Aorta (tissue), 5 donors: ENCODE measurements at regions of chr2 and their contacts with region 1.

Region 1: GRCh38 chr2:46389417-46389916 is 89.9 kb upstream of the TMEM247 start:
- DNase-seq: no peak
- ATAC-seq: peak; percentile 11
- H3K4me3 ChIP-seq: no peak overlapping the region
- H3K27ac ChIP-seq: no peak overlapping the region
- H3K4me1 ChIP-seq: peaks cover 0 to 5% of the 10 kb centered on the region in 2 donors
- H3K27me3 ChIP-seq: no peaks in the 10 kb centered on the region

Region 2: GRCh38 chr2:45691171-45691999 is 698.1 kb before region 1 on chr2:
- intact Hi-C with region 1: no loop called
- DNase-seq: no peak
- ATAC-seq: no peak
- H3K4me3 ChIP-seq: no peak overlapping the region
- H3K27ac ChIP-seq: no peak overlapping the region
- H3K4me1 ChIP-seq: peaks cover 0 to 9% of the 10 kb centered on the region in 2 donors
- H3K27me3 ChIP-seq: no peaks in the 10 kb centered on the region

Region 3: DNA sequence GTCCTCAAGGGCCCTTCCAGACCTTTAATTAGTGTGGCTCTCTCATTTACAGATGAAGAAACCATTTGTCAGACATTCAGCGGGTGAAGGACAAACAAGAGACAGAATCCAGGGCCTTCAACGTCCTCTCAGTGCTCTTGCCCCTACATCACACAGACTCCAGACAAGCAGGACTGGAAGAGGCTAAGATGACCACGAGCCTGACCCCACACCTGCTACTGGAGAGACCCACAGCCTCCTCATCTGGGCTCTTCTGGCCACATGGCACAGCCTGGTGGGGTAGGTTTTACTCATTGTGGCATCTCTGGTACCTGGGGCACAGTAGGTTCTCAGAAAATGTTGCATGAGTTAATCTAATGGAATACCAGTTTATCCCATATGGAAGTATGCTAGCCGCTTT is 20.3 kb after region 1 on chr2:
- intact Hi-C with region 1: loop called in 1 of 2 experiments (anchors 2 kb)
- DNase-seq: no peak
- ATAC-seq: no peak
- H3K4me3 ChIP-seq: no peak overlapping the region
- H3K27ac ChIP-seq: no peak overlapping the region
- H3K4me1 ChIP-seq: no peaks in the 10 kb centered on the region
- H3K27me3 ChIP-seq: no peaks in the 10 kb centered on the region

Region 4: GRCh38 chr2:46439582-46439981 is 50.1 kb after region 1 on chr2:
- intact Hi-C with region 1: no loop called
- DNase-seq: no peak
- ATAC-seq: no peak
- H3K4me3 ChIP-seq: no peak overlapping the region
- H3K27ac ChIP-seq: no peak overlapping the region
- H3K4me1 ChIP-seq: no peaks in the 10 kb centered on the region
- H3K27me3 ChIP-seq: no peaks in the 10 kb centered on the region

Region 5: DNA sequence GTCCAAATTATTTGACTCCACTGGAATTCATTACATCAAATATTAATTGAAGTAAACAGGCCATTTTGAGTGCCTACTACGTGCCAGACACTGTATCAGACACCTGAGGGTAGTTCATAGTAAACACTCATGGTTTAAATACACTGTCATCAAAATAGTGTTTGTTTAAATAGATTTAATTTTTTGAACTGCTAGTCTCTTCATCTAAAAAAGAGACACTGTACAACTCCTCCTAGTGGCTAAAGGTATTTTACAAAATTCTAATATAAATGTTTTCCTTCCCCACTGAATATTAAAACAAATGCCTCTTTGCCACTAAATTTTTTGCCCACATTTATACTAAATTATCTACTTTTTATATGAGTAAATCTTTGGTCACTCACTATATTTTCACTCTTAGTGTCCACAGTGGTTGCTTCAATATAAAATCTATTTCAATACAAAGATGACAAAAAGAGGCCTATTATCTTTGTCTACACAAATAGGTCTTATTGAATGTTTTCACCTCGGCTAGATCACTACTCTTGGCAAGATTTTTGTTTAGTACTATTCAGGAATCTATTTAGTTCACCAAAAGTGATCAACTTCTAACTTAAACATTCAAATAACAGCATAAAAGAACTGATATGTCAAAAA is 212.0 kb after region 1 on chr2:
- intact Hi-C with region 1: no loop called
- DNase-seq: no peak
- ATAC-seq: no peak
- H3K4me3 ChIP-seq: no peak overlapping the region
- H3K27ac ChIP-seq: no peak overlapping the region
- H3K4me1 ChIP-seq: no peaks in the 10 kb centered on the region
- H3K27me3 ChIP-seq: no peaks in the 10 kb centered on the region